Activated T-helper 1 cell treated with anti-CD3 and anti-CD28 coated beads, Interleukin-12 subunit alpha, Interleukin-12 subunit beta, Interleukin-2, Interleukin-4 antibody, amounts not matched to agents 30 ng/mL and 10 ng/mL and 1 ng/mL, durations not matched to agents 14 hours and 24 hours and 36 hours (primary cell): ENCODE measurements at regions of chr14 and their contacts with region 1.

Region 1: GRCh38 chr14:103576371-103577024 is 13.7 kb downstream of the COA8 start:
- DNase-seq: no peak
- H3K4me3 Mint-ChIP-seq: no peak overlapping the region
- H3K27ac Mint-ChIP-seq: no peak overlapping the region
- H3K4me1 Mint-ChIP-seq: no peaks in the 10 kb centered on the region
- H3K27me3 Mint-ChIP-seq: no peaks in the 10 kb centered on the region

Region 2: GRCh38 chr14:103504991-103505565 is 71.4 kb before region 1 on chr14:
- intact Hi-C with region 1: no loop called
- DNase-seq: no peak
- H3K4me3 Mint-ChIP-seq: no peak overlapping the region
- H3K27ac Mint-ChIP-seq: no peak overlapping the region
- H3K4me1 Mint-ChIP-seq: peaks cover 4% of the 10 kb centered on the region
- H3K27me3 Mint-ChIP-seq: no peaks in the 10 kb centered on the region

Region 3: DNA sequence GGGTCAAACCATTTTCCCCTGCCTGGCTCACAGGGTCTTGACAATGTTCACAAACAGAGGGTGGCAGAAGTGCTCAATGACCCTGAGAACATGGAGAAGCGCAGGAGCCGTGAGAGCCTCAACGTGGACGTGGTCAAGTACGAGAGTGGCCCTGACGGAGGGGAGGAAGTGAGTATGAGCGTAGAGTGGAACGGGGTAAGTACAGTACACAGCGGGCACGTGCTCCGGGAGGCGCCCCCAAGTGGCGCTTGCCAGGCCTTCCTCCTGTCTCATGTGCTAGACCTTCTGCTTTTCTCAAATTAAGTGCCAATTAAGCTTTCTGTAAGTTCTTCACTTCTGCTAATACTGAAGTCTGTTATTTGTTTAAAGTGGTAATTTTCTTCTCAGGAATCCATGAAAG is 102.9 kb after region 1 on chr14:
- intact Hi-C with region 1: loop called (anchors 1 kb)
- DNase-seq: no peak
- H3K4me3 Mint-ChIP-seq: no peak overlapping the region
- H3K27ac Mint-ChIP-seq: no peak overlapping the region
- H3K4me1 Mint-ChIP-seq: peaks cover 7% of the 10 kb centered on the region
- H3K27me3 Mint-ChIP-seq: no peaks in the 10 kb centered on the region